ENCODE measurements at regions of chr9 and their contacts with region 1.

Region 1: GRCh38 chr9:37776328-37776727 is 8.5 kb downstream of the EXOSC3 start:
- DNase-seq: no peak
- H3K4me3 ChIP-seq: no peak overlapping the region
- H3K27ac ChIP-seq: no peak overlapping the region
- H3K4me1 ChIP-seq: no peaks in the 10 kb centered on the region
- H3K27me3 ChIP-seq: no peaks in the 10 kb centered on the region
- CTCF ChIP-seq: no peak
- EP300 ChIP-seq: no peak
- POLR2A ChIP-seq: no peak

Region 2: GRCh38 chr9:37503736-37504135 is 272.6 kb before region 1 on chr9:
- in situ Hi-C with region 1: no loop called
- intact Hi-C with region 1: no loop called
- DNase-seq: peak; percentile 13
- H3K4me3 ChIP-seq: no peak overlapping the region
- H3K27ac ChIP-seq: no peak overlapping the region
- H3K4me1 ChIP-seq: no peaks in the 10 kb centered on the region
- H3K27me3 ChIP-seq: no peaks in the 10 kb centered on the region
- CTCF ChIP-seq: no peak
- EP300 ChIP-seq: no peak
- POLR2A ChIP-seq: peak; percentile 25

Region 3: DNA sequence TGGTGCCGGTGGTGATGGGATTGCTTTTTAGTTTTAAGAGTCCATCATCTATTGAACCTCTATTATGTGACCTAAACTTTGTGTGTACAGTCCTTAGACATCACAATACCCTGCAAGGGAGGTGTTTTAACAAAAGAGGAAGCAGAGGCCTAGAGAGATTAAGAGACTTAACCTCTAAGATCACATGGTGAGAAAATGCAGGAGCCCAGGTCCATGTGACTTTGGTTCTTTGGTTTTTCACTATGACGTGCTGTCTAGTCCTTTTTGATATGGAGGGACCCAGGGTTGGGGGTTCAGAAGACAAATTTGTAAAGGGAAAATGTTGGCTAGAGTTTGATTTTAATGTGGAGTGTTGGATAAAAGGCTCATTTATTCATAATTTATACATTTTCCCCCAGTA is 56.8 kb before region 1 on chr9:
- in situ Hi-C with region 1: loop called in 1 of 4 experiments (anchors 10 kb)
- intact Hi-C with region 1: no loop called
- DNase-seq: no peak
- H3K4me3 ChIP-seq: no peak overlapping the region
- H3K27ac ChIP-seq: no peak overlapping the region
- H3K4me1 ChIP-seq: no peaks in the 10 kb centered on the region
- H3K27me3 ChIP-seq: no peaks in the 10 kb centered on the region
- CTCF ChIP-seq: no peak
- EP300 ChIP-seq: no peak
- POLR2A ChIP-seq: no peak